Caco-2 (cell line): ENCODE measurements at regions of chr20 and their contacts with region 1.

Region 1: GRCh38 chr20:31572701-31573554 is 32.2 kb upstream of the ID1 start:
- DNase-seq: peak; percentile 100
- H3K4me3 ChIP-seq: peak overlapping the region; percentile 56
- H3K4me3 Mint-ChIP-seq: peak overlapping the region; percentile 87
- H3K27ac Mint-ChIP-seq: peak overlapping the region; percentile 98
- H3K4me1 ChIP-seq: peaks cover 24% of the 10 kb centered on the region
- H3K4me1 Mint-ChIP-seq: peaks cover 37% of the 10 kb centered on the region
- H3K27me3 ChIP-seq: no peaks in the 10 kb centered on the region
- H3K27me3 Mint-ChIP-seq: no peaks in the 10 kb centered on the region
- CTCF ChIP-seq: peak in 1 of 2 experiments; percentile 16

Region 2: DNA sequence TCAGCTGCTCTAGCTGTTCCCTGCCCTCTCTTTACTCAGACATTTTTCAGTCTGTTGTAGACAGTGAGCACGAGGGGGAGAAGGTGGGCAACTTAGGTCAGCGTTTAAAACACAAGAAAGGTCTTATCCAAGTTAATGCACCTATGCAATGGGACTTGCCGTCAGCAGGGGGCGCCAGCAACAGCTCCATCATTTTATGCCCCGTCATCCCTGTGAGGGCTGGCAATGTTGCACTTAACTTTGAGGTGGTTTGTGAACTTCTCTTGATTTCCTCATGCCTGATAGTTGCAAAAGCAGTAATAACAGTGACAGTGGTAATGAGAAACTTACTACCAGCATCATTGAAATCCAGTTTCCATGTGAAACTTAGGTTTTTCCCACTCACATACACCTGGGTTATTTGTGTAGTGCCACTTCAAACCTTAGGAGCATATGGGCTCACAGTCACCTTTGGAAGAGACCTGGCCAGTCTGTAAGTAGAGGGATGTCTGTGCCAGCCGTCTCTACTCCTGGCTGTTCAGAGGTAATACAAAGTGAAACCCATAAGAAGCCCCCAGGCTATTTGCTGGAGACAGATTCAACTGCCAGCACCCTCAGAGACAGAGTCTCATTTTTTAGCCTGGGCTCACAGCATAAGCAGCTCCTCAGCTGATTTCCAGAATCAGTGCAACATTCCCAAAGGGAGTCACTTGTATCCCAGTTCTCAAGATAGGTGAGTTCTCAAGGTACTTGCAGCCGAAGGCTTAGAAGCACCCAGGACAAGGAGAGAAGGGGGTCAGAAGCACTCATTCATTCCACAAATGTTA is 12.6 kb before region 1 on chr20:
- CTCF ChIA-PET with region 1: interaction called, 123 read pairs
- POLR2A ChIA-PET with region 1: interaction called, 21 read pairs
- intact Hi-C with region 1: no loop called
- DNase-seq: peak; percentile 85 to 87
- H3K4me3 ChIP-seq: no peak overlapping the region
- H3K4me3 Mint-ChIP-seq: no peak overlapping the region
- H3K27ac Mint-ChIP-seq: peak overlapping the region; percentile 68
- H3K4me1 ChIP-seq: peaks cover 8% of the 10 kb centered on the region
- H3K4me1 Mint-ChIP-seq: peaks cover 4% of the 10 kb centered on the region
- H3K27me3 ChIP-seq: no peaks in the 10 kb centered on the region
- H3K27me3 Mint-ChIP-seq: no peaks in the 10 kb centered on the region
- CTCF ChIP-seq: peak; percentile 98 to 99

Region 3: DNA sequence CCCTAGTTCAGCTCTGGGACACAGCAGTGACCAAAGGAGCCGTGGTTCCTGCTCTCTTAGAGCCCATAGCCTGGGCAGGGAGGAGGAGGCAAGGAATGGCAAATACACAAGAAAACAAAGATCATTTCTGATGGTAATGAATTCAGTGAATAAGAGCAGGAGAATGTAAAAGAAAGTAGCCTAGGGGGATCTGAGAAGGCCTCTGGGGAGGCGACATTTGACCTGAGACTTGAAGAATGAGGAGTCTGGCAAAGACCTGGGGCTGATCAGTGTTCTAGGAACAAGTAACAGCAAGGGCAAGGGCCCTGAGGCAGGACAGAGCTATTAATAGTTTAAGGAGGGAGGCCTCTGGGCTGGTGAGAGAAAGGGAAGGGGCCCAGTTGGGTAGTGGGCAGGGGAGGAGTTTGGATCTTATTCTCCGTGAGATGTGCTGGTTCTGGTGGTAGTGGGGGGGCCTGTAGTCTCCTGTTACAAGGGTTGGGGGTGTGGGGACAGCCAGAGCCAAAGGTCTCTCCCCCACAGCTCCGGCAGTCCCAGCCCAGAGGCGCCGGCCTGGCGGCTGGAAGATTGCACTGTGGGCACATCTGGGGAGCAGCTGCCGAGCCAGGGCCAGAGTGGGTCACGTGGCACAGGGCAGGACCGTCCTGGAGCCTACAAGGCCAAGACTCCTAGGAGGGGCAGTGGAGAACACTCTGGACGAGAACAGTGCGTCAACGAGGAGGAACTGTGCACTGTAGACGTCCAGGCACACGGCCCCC is 22.9 kb after region 1 on chr20:
- CTCF ChIA-PET with region 1: interaction called, 7 read pairs
- POLR2A ChIA-PET with region 1: interaction called, 16 read pairs
- intact Hi-C with region 1: no loop called
- DNase-seq: peak; percentile 61 to 87
- H3K4me3 ChIP-seq: no peak overlapping the region
- H3K4me3 Mint-ChIP-seq: no peak overlapping the region
- H3K27ac Mint-ChIP-seq: peak overlapping the region; percentile 66
- H3K4me1 ChIP-seq: peaks cover 25% of the 10 kb centered on the region
- H3K4me1 Mint-ChIP-seq: peaks cover 21% of the 10 kb centered on the region
- H3K27me3 ChIP-seq: no peaks in the 10 kb centered on the region
- H3K27me3 Mint-ChIP-seq: no peaks in the 10 kb centered on the region
- CTCF ChIP-seq: no peak

Region 4: DNA sequence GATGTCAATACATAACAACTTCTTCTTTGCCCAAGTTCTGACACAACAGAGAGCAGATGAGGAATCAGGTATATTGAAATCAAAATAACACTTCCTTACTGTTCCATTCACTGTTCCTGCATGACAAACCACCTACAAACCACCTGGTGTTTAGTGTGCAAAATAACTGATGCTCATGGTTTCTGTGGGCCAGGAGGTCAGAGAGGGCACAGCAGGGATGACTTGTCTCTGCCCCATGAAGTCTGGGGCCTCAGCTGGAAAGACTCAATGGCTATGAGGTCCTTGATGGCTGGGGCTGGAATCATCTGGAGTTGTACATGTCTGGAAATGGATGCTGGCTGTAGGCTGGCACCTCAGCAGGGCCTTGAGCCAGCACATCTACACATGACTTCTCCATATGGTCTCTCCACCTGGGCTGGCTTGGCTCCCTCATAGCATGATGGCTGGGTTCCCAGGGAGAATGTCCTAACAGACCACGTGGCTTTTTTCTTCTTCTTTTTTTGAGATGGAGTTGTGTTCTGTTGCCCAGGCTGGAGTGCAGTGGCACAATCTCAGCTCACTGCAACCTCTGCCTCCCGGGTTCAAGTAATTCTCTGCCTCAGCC is 57.4 kb after region 1 on chr20:
- CTCF ChIA-PET with region 1: interaction called, 18 read pairs
- POLR2A ChIA-PET with region 1: interaction called, 24 read pairs
- intact Hi-C with region 1: no loop called
- DNase-seq: no peak
- H3K4me3 ChIP-seq: no peak overlapping the region
- H3K4me3 Mint-ChIP-seq: no peak overlapping the region
- H3K27ac Mint-ChIP-seq: no peak overlapping the region
- H3K4me1 ChIP-seq: peaks cover 9% of the 10 kb centered on the region; the same call in 1 of the 2 replicates
- H3K4me1 Mint-ChIP-seq: no peaks in the 10 kb centered on the region
- H3K27me3 ChIP-seq: no peaks in the 10 kb centered on the region
- H3K27me3 Mint-ChIP-seq: no peaks in the 10 kb centered on the region
- CTCF ChIP-seq: no peak

Region 5: DNA sequence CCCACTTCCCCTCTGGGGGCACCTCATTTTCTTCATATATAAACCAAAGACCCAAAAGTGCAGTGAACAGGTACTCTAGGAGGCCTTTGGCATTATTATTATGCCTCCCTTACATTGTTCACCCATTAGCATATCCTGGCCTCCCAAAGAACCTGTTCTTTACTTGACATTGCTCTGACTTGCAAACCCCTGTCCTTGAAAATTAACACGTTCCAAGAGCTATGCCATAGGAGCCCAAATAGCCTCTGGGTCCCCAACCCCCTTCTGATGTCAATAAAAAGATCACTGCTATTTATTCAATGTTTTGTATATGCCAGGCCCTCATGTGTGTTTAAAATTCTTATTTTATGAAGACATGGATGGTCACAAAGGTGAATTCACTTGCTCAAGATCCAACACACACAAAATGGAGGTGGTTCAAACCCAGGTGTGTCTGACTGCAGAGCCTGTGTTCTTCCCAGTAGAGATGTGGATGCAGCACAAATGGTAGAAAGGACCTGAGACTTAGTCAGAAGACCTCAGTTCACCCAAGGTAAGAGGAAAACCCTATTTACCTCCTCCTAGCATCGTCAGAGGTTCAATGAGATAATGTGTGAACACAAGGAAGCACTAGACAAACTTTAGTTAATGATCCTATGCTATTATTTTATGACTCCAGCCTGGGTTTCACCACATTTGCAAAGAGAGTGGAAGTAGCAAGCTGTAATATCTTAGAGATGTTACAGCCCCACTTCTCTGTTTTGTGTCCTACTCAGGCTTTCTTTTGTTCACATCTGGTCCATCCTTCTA is 113.1 kb after region 1 on chr20:
- CTCF ChIA-PET with region 1: no interaction called
- POLR2A ChIA-PET with region 1: no interaction called
- intact Hi-C with region 1: no loop called
- DNase-seq: no peak
- H3K4me3 ChIP-seq: no peak overlapping the region
- H3K4me3 Mint-ChIP-seq: no peak overlapping the region
- H3K27ac Mint-ChIP-seq: peak overlapping the region; percentile 82
- H3K4me1 ChIP-seq: peaks cover 69% of the 10 kb centered on the region
- H3K4me1 Mint-ChIP-seq: peaks cover 81% of the 10 kb centered on the region
- H3K27me3 ChIP-seq: no peaks in the 10 kb centered on the region
- H3K27me3 Mint-ChIP-seq: no peaks in the 10 kb centered on the region
- CTCF ChIP-seq: no peak

Region 6: GRCh38 chr20:31760519-31761240 is 187.8 kb after region 1 on chr20:
- CTCF ChIA-PET with region 1: no interaction called
- POLR2A ChIA-PET with region 1: interaction called, 10 read pairs
- intact Hi-C with region 1: no loop called
- DNase-seq: no peak
- H3K4me3 ChIP-seq: no peak overlapping the region
- H3K4me3 Mint-ChIP-seq: no peak overlapping the region
- H3K27ac Mint-ChIP-seq: peak overlapping the region; percentile 32
- H3K4me1 ChIP-seq: peaks cover 19% of the 10 kb centered on the region
- H3K4me1 Mint-ChIP-seq: peaks cover 32% of the 10 kb centered on the region
- H3K27me3 ChIP-seq: no peaks in the 10 kb centered on the region
- H3K27me3 Mint-ChIP-seq: no peaks in the 10 kb centered on the region
- CTCF ChIP-seq: no peak